ENCODE measurements at regions of chr21 and their contacts with region 1.

Region 1: GRCh38 chr21:29896884-29897283 is 42.9 kb downstream of the GRIK1 start:
- DNase-seq: no peak
- H3K4me3 ChIP-seq: no peak overlapping the region
- H3K27ac ChIP-seq: no peak overlapping the region
- H3K4me1 ChIP-seq: no peaks in the 10 kb centered on the region
- H3K27me3 ChIP-seq: no peaks in the 10 kb centered on the region
- CTCF ChIP-seq: no peak

Region 2: GRCh38 chr21:29843804-29844203 is 53.1 kb before region 1 on chr21:
- CTCF ChIA-PET with region 1: no interaction called
- dilution Hi-C with region 1: loop called (anchors 5 kb)
- in situ Hi-C with region 1: no loop called
- intact Hi-C with region 1: no loop called
- DNase-seq: no peak
- H3K4me3 ChIP-seq: no peak overlapping the region
- H3K27ac ChIP-seq: no peak overlapping the region
- H3K4me1 ChIP-seq: no peaks in the 10 kb centered on the region
- H3K27me3 ChIP-seq: no peaks in the 10 kb centered on the region
- CTCF ChIP-seq: no peak

Region 3: DNA sequence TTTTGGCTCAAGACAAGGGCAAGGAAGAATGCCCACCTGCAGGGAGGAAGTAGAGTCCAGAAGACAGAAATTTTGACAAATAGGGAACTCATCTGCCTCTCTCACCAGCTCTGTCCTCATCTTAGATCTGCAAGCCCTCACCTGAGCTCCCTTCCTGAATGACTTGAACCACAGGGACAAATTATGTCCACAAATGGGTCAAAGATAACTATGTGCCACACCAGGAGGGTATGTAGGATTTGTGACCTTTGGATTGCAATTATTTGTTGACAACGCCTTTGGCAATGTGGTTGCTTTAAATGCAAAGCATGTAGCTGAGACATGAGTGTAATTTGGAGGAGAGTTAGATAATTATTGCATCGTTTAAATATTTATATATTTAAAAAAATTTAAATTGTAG is 36.5 kb before region 1 on chr21:
- CTCF ChIA-PET with region 1: no interaction called
- dilution Hi-C with region 1: no loop called
- in situ Hi-C with region 1: no loop called
- intact Hi-C with region 1: no loop called
- DNase-seq: no peak
- H3K4me3 ChIP-seq: no peak overlapping the region
- H3K27ac ChIP-seq: no peak overlapping the region
- H3K4me1 ChIP-seq: no peaks in the 10 kb centered on the region
- H3K27me3 ChIP-seq: no peaks in the 10 kb centered on the region
- CTCF ChIP-seq: no peak

Measured in mammary epithelial cell (primary cell).